ENCODE measurements at regions of chr1 and their contacts with region 1.

Region 1: DNA sequence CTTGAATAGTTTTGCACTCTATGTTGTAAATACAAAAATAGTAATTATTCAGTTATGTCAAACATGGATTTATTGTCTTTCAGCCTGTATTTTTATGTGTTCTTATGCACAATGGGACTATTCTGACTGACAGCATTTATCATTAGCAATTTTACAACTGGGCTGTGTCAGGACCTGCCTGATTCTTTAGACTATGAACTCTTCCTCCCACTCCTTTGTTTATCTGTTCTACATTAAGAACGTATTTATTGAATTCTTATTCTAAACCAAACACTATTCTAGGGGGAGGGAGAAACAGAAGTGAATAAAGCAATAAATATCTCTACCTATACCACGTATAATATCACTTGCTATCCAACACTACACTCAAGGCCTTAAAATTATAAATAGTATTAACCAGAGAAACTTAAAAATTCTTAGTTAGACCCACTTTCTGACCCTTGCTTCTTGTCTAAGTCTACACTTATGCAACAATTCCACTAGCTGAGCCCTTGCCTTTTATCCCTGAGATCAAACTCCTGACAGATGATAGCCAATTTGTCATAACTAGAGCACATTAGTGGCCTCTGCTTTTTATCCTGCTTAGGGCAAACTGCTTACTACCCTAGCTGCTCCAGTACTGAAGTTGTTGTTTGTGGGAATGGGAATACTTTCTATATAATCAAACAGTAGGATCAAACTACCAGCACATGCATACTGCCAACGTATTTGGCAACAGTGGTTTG is 494.3 kb downstream of the BRINP3 start:
- DNase-seq: no peak
- H3K4me3 ChIP-seq: no peak overlapping the region
- H3K4me3 Mint-ChIP-seq: no peak overlapping the region
- H3K27ac Mint-ChIP-seq: no peak overlapping the region
- H3K4me1 ChIP-seq: 0 out of 2 replicates have a peak, but pooled peaks cover 3% of the 10 kb centered on the region
- H3K4me1 Mint-ChIP-seq: no peaks in the 10 kb centered on the region
- H3K27me3 ChIP-seq: no peaks in the 10 kb centered on the region
- H3K27me3 Mint-ChIP-seq: no peaks in the 10 kb centered on the region
- CTCF ChIP-seq: no peak

Region 2: DNA sequence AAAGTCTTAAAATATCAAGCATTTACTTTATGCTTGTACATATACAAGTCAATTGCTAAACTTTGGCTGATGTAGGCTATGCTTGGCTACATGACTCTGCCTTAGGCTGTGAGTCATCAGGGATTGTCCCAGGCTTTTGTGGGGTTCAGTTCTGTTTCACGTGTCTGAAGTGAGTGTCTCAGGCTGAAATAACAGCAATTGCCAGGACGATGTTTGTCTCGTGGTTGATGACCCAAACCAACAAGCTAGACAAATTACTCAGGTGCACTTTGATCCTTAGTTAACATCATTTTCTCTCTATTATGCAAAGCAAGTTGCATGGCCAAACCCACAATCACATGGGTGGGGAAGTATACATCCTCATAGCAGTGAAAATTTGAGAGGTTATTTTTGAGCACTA is 84.3 kb after region 1 on chr1:
- CTCF ChIA-PET with region 1: no interaction called
- POLR2A ChIA-PET with region 1: no interaction called
- intact Hi-C with region 1: loop called (anchors 5 kb)
- DNase-seq: no peak
- H3K4me3 ChIP-seq: no peak overlapping the region
- H3K4me3 Mint-ChIP-seq: no peak overlapping the region
- H3K27ac Mint-ChIP-seq: no peak overlapping the region
- H3K4me1 ChIP-seq: no peaks in the 10 kb centered on the region
- H3K4me1 Mint-ChIP-seq: no peaks in the 10 kb centered on the region
- H3K27me3 ChIP-seq: no peaks in the 10 kb centered on the region
- H3K27me3 Mint-ChIP-seq: no peaks in the 10 kb centered on the region
- CTCF ChIP-seq: no peak

Measured in Caco-2 (cell line).